ENCODE measurements at regions of chr2 and their contacts with region 1.

Region 1: DNA sequence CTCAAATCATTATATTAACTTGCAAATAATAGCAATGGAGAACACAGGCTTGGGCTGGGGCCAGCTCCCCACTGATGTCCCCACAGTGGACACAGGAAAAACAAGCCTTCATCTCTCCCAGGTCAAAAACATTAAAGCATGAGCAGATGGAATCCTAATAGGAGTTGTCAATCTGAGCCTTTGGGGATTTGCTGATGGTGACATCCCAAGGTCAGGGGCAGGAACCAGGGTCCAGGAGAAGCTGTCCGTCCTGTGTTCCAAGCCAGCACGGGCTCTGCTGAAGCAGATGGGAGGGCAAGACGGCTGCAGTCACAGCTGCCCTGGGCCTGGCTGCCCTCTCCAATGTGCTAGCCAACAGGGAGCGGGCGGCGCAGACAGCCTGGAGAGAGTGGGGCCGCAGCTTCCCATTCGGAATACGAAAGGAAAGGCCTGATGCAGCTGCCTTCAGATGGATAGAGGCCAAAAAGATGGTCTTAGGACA is 135.5 kb downstream of the NDUFA10 start:
- DNase-seq: no peak
- H3K4me3 ChIP-seq: no peak overlapping the region
- H3K27ac ChIP-seq: no peak overlapping the region
- H3K4me1 ChIP-seq: no peaks in the 10 kb centered on the region
- H3K27me3 ChIP-seq: no peaks in the 10 kb centered on the region
- CTCF ChIP-seq: no peak
- EP300 ChIP-seq: no peak
- POLR2A ChIP-seq: no peak

Region 2: DNA sequence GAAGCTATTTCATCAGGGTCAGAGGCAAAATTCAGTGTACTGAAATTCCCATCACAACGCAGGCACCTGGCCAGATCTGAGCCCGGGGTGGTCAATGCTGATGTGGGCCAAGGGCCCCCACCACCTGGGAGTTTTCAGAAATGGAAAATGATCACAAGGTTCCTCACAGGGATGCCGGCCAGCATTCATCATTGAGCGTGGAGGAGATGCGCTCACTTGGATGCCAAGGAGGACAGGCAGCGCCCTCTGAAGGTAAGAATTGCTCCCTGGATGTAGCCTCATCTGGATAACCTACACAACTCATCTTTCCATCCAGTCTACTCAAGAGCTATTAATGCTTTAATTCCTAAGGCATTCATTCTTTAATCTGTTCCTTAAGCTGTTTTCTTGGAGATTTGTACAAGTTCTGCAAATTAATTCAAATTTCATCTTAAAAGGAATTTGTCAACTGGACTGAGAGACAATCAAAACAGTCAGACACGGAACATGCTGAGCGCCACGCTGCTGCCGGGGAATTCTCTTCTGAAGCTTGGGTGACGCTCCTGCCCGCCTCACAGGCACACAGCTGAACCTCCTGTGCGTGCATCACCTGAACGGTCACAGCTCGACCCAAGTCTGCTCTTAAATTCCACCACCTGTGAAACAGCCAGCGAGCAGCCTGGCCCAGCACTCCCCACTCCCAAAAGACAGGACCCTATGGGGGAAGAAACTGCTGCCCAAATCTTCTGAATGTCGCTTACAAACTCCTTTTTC is 695.6 kb before region 1 on chr2:
- intact Hi-C with region 1: loop called in 1 of 4 experiments (anchors 10 kb)
- DNase-seq: peak in 4 of 5 donors; percentile 19 to 31 (median 26)
- H3K4me3 ChIP-seq: no peak overlapping the region
- H3K27ac ChIP-seq: no peak overlapping the region
- H3K4me1 ChIP-seq: peaks cover 3% of the 10 kb centered on the region
- H3K27me3 ChIP-seq: no peaks in the 10 kb centered on the region
- CTCF ChIP-seq: no peak
- EP300 ChIP-seq: no peak
- POLR2A ChIP-seq: no peak

Region 3: GRCh38 chr2:239735131-239735828 is 154.4 kb before region 1 on chr2:
- intact Hi-C with region 1: no loop called
- DNase-seq: no peak
- H3K4me3 ChIP-seq: no peak overlapping the region
- H3K27ac ChIP-seq: no peak overlapping the region
- H3K4me1 ChIP-seq: no peaks in the 10 kb centered on the region
- H3K27me3 ChIP-seq: no peaks in the 10 kb centered on the region
- CTCF ChIP-seq: no peak
- EP300 ChIP-seq: no peak
- POLR2A ChIP-seq: no peak